HEK293T (cell line): ENCODE measurements at regions of chr2 and their contacts with region 1.

Region 1: DNA sequence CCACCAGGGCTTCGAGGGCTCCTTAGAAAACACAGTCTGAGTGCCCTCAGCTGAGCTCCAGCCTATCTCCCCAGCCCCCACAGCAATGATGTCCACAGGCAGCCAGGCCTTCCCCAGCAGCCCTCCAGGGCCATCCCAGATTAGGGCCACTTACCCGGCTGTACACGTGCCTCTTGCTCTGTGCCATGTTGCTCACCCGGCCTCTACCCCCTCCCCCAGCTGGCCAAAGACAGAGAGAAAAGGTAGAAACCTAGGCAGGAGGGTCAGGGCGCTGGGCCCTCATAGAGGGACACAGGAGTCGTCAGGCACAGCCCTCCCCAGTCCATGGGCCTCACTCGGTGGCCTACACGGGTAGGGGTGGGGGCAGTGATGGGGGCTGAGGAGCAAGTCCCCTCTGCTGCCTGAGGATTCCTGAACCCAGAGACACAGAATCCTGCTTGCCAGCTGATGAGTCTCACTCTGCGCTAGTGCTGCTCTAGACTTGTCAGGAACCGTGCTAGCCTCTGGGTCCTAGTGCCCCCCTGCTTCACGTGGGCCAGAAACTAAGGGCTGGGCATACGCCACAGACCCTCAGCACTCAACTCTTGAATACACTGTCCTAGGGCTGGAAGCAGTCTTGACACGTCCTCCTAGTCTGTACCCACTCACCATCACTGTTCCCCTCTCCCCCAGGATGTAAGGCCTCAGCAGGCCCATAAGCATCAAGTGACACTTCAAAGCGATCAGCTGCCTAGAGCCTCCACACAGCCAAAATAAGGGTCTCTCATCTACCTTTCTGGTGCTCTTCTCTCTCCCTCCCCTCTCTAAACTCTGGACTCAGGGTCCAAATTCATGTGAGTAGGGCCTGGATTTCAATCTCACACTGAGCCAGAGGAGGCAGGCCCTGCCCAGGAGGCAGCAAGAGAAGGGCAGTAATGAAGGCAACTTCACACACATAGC is at the start of gene DCTN1:
- DNase-seq: peak; percentile 57

Region 2: GRCh38 chr2:74391580-74392448 is 11.7 kb after region 1 on chr2:
- CTCF ChIA-PET with region 1: interaction called, 6 read pairs
- POLR2A ChIA-PET with region 1: interaction called, 13 read pairs
- DNase-seq: peak; percentile 91